ENCODE measurements at regions of chr2 and their contacts with region 1.

Region 1: DNA sequence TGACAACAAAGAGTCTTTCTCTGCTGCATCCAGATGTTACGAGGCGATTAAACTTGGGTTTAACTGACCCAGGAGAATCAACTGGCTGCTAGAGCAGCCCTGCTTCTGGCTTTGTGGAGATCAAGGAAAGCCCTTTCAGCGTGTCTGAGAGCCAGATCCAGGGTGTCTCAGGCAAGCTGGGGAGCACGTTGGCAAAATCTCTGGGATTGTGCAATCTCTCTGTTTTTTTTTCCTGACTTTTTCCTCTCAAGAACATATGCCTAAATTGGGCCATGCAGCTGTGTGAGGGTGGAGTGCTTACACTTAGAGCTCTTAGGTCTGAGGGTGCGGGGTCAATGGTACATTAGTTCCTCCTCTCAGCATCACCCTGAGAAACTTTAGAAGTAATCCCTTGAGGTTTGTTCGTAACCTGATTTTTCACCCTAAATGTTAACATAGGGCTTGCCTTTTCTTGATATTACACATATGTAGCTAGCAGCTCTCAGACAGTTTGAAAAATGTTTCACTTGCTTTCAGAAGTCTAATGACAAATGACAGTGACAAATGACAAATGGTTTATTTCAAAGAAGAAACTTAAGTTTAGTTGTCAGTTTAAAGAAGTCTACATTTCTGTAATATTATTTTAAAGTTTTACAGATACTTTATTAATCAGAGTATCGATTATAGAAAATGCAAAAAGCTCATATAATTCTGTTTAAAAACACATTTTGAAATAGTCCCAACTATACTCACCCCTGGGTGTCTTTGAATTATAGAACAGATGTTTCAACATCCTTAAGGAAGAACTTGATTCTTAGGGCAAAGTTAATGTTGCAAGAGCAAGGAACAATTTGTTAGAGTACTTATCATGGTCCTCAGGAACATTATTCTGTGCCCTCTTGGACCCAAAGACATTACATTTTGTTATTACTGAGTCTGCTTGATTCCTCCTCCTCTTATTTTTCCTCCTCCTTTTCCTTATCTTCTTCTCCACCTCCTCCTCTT is 38.4 kb upstream of the ZSWIM2 start:
- DNase-seq: peak; percentile 71

Region 2: DNA sequence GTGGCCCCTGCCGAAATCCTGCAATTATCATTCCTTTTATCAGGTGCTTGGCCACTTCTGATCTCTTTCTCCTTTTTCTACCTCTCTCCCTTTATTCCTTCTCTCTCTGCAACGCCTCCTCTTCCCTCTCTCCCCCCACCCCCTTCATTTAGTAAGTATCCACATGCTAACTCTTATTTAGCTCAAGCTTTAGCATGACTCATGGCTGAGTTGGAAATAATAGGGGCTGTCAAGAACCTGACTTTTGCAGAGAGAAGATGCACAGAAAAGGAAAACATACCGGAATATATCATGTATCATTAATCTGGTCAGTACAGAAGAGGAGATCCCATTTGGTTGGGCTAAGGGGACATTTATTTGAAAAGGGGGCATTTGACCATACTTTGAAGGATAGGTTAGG is 160.5 kb before region 1 on chr2:
- in situ Hi-C with region 1: no loop called
- DNase-seq: no peak

Region 3: DNA sequence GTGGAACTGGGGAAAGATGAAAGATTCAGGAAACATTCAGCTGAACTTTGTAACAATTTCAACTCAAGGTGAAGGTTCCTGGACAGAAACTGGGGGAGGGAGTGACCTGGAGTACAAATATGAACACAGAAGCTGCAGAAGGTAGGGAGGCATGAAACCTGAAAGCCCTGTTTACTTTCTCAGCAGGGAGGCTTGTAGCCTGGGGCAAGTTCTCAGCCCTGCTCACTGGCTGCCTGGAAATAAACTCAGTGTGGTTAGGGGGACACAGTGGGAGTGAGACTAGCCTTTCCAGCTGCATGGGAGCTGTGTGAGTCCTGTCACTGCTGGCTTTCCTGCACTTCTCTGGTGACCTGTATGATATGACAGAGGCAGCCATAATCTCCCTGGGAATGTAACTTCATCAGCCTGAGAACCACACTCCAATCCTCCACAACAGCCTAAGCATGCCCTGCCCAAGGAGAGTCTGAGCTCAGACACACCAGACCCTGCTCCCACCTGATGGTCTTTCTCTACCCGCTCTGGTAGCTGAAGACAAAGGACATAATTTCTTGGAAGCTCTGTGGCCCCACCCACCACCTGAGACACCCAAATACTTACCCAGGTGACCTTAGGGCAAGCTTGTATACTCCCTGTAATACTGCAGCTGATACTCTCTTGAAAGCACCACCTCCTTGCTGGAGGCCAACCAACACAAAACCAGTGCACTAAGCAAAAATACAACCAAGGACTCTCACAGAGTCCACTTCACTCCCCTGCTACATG is 115.4 kb before region 1 on chr2:
- in situ Hi-C with region 1: no loop called
- DNase-seq: no peak

Region 4: DNA sequence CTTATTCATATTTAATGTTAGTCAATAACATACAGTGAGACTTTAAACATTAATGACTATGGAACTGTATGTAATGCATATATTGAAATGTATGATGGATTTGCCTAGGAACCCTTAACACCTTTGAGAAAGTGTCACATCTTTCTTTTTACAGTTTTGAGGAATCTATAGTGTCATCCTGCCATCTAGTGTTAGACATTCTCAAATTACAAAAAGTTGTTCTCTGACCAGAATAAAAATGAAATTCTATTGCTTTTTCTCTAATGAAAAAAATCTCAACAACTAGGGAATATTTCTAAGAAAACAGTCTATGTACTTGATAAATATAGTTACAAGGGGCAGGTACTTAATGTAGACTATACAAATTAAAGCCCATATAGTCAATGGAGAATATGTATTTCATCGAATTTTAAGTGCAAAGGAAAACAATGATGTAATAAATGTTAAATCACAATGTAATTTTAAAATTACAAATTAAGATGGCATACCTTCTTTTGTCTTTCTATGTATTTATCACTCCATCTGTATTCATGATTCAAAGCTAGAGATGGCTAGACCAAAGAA is 565.8 kb after region 1 on chr2:
- in situ Hi-C with region 1: loop called (anchors 25 kb)
- DNase-seq: peak; percentile 55